MCF 10A (cell line): ENCODE measurements at regions of chr4 and their contacts with region 1.

Region 1: GRCh38 chr4:180664766-180665368 is 1578.3 kb upstream of the TENM3 start:
- DNase-seq: peak; percentile 91
- H3K4me3 Mint-ChIP-seq: no peak overlapping the region
- H3K27ac Mint-ChIP-seq: no peak overlapping the region
- H3K4me1 Mint-ChIP-seq: no peaks in the 10 kb centered on the region
- H3K27me3 Mint-ChIP-seq: no peaks in the 10 kb centered on the region
- CTCF ChIP-seq: peak; percentile 64

Region 2: GRCh38 chr4:179867300-179867878 is 797.5 kb before region 1 on chr4:
- CTCF ChIA-PET with region 1: interaction called, 10 read pairs
- POLR2A ChIA-PET with region 1: no interaction called
- intact Hi-C with region 1: loop called (anchors 1 kb)
- DNase-seq: peak; percentile 81
- H3K4me3 Mint-ChIP-seq: no peak overlapping the region
- H3K27ac Mint-ChIP-seq: no peak overlapping the region
- H3K4me1 Mint-ChIP-seq: no peaks in the 10 kb centered on the region
- H3K27me3 Mint-ChIP-seq: no peaks in the 10 kb centered on the region
- CTCF ChIP-seq: peak; percentile 78

Region 3: GRCh38 chr4:180449395-180449956 is 215.4 kb before region 1 on chr4:
- CTCF ChIA-PET with region 1: interaction called, 38 read pairs
- POLR2A ChIA-PET with region 1: interaction called, 3 read pairs
- intact Hi-C with region 1: loop called (anchors 1 kb)
- DNase-seq: peak; percentile 77
- H3K4me3 Mint-ChIP-seq: peak overlapping the region; percentile 19
- H3K27ac Mint-ChIP-seq: no peak overlapping the region
- H3K4me1 Mint-ChIP-seq: no peaks in the 10 kb centered on the region
- H3K27me3 Mint-ChIP-seq: no peaks in the 10 kb centered on the region
- CTCF ChIP-seq: peak; percentile 69

Region 4: GRCh38 chr4:180675359-180675650 is 10.4 kb after region 1 on chr4:
- CTCF ChIA-PET with region 1: interaction called, 69 read pairs
- POLR2A ChIA-PET with region 1: interaction called, 3 read pairs
- intact Hi-C with region 1: no loop called
- DNase-seq: no peak
- H3K4me3 Mint-ChIP-seq: no peak overlapping the region
- H3K27ac Mint-ChIP-seq: no peak overlapping the region
- H3K4me1 Mint-ChIP-seq: no peaks in the 10 kb centered on the region
- H3K27me3 Mint-ChIP-seq: no peaks in the 10 kb centered on the region
- CTCF ChIP-seq: no peak

Region 5: GRCh38 chr4:180947425-180947824 is 282.6 kb after region 1 on chr4:
- CTCF ChIA-PET with region 1: interaction called, 16 read pairs
- POLR2A ChIA-PET with region 1: interaction called, 4 read pairs
- intact Hi-C with region 1: loop called (anchors 2 kb)
- DNase-seq: peak; percentile 59
- H3K4me3 Mint-ChIP-seq: no peak overlapping the region
- H3K27ac Mint-ChIP-seq: no peak overlapping the region
- H3K4me1 Mint-ChIP-seq: peaks cover 11% of the 10 kb centered on the region
- H3K27me3 Mint-ChIP-seq: no peaks in the 10 kb centered on the region
- CTCF ChIP-seq: peak; percentile 45

Region 6: DNA sequence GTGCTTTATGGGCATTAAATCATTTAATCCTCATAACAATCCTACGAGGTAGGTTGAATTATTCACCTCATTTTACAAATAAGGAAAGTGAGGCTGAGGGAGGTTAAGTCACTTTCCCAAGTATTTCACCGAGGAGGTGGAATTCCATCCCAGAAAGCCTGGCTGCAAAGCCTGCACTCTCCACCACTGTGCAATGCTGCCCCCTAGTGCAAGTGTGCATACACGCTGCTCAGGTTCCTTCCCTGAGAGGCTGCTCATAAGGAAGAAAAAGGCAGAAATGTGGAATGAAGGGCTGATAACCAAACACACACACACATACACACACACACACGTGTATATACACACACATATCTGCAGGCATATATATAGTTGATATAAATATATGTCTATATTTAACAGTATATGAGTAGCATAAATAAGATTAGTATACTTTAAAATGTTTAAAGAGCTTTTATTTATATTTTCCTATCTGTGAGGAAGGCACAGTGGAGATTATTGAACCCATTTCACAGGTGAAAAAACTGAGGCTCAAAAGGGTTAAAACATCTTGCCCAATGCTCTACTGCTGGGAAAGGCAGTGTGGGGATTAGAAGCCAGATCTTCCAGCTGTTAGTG is 863.8 kb after region 1 on chr4:
- CTCF ChIA-PET with region 1: interaction called, 19 read pairs
- POLR2A ChIA-PET with region 1: interaction called, 3 read pairs
- intact Hi-C with region 1: loop called (anchors 5 kb)
- DNase-seq: peak; percentile 89
- H3K4me3 Mint-ChIP-seq: no peak overlapping the region
- H3K27ac Mint-ChIP-seq: no peak overlapping the region
- H3K4me1 Mint-ChIP-seq: no peaks in the 10 kb centered on the region
- H3K27me3 Mint-ChIP-seq: no peaks in the 10 kb centered on the region
- CTCF ChIP-seq: peak; percentile 92